Ovary (tissue), 10 donors: ENCODE measurements at regions of chr15 and their contacts with region 1.

Region 1: DNA sequence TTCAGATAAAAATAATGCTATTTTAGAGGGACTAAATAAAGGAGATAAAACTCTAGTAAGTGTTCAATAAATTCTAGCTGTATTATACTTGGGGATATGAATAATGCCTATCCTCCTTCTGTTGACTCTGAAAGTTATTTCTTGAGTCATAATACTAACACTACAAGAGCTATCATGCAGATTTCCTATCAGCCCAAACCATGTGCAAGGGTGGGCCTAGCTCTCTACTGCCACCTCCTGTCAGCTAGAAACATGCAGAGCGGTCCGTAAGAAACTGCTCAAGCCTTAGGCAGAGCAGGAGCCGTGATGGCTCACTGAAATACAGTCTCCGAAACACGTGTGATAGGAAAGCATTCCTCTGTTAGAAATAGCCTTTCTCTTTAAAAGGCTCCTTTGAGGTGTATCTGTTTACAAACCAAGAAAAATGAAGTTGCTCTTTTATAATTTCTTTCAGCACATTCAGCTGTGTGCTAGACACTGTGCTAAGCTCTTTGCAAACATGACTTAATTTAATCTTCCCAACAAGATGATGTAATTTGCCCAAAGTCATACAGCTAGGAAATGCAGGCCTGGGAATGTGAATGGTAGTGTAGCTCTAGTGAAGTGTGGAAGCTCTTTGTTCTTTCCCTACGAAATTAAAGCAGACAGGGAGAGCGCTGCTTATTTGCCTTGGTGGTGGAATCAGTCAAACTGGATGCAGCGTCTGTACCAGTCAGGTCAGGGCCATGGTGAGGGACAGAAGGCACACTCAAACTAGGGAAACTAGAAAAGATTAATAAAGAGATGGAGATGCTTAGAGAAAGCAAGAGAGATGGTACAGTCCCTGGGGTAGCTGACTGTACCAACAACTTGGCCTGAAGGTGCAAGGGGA is 43.1 kb downstream of the MTHFS start:
- DNase-seq: peak; percentile 39 to 69 (median 63)
- H3K4me3 ChIP-seq: no peak overlapping the region
- H3K27ac ChIP-seq: no peak overlapping the region
- H3K4me1 ChIP-seq: no peaks in the 10 kb centered on the region
- H3K27me3 ChIP-seq: no peaks in the 10 kb centered on the region
- CTCF ChIP-seq: peak; percentile 69 to 83 (median 72)
- EP300 ChIP-seq: no peak
- POLR2A ChIP-seq: no peak

Region 2: DNA sequence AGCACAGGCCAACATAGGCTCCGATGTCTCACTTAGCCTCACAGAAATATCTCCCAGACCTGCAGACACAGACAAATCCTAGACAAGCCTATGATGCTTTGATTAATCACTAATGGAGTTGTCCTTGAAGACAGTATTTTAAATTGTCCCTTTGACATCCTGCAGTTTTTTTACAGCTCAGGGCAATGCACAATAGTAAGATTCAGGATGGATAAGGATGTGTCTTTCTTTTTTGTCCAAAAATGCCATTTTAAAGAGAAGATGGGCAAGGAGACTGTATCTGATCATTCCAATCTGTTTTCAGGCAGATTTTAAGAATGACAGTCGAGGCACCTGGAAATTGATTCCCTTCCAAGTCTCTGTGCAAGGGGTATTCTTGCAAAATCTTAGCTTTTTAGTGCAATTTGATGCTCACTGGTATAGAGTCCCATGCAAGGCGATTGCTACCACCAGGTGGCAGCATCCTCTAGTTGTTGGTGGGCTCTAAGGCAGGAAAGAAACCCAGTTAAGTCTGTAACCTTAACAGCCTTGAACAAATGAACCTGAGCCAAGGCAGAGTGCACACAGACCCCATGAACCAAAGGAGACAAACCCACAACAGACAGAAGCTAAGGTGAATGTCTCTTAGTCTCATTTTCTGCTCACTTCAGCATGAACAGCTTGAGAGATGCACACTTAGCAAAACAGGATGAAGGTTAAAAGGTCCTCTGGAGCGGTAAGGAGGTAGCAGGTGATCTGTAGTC is 472.8 kb before region 1 on chr15:
- intact Hi-C with region 1: loop called in 3 of 4 experiments (anchors 5 to 10 kb)
- DNase-seq: peak; percentile 63 to 86 (median 81)
- H3K4me3 ChIP-seq: no peak overlapping the region
- H3K27ac ChIP-seq: no peak overlapping the region
- H3K4me1 ChIP-seq: peaks cover 1% of the 10 kb centered on the region
- H3K27me3 ChIP-seq: no peaks in the 10 kb centered on the region
- CTCF ChIP-seq: peak; percentile 52 to 83 (median 60)
- EP300 ChIP-seq: no peak
- POLR2A ChIP-seq: no peak

Region 3: GRCh38 chr15:79798311-79798710 is 55.4 kb before region 1 on chr15:
- intact Hi-C with region 1: no loop called
- DNase-seq: no peak
- H3K4me3 ChIP-seq: no peak overlapping the region
- H3K27ac ChIP-seq: no peak overlapping the region
- H3K4me1 ChIP-seq: no peaks in the 10 kb centered on the region
- H3K27me3 ChIP-seq: no peaks in the 10 kb centered on the region
- CTCF ChIP-seq: no peak
- EP300 ChIP-seq: no peak
- POLR2A ChIP-seq: no peak

Region 4: DNA sequence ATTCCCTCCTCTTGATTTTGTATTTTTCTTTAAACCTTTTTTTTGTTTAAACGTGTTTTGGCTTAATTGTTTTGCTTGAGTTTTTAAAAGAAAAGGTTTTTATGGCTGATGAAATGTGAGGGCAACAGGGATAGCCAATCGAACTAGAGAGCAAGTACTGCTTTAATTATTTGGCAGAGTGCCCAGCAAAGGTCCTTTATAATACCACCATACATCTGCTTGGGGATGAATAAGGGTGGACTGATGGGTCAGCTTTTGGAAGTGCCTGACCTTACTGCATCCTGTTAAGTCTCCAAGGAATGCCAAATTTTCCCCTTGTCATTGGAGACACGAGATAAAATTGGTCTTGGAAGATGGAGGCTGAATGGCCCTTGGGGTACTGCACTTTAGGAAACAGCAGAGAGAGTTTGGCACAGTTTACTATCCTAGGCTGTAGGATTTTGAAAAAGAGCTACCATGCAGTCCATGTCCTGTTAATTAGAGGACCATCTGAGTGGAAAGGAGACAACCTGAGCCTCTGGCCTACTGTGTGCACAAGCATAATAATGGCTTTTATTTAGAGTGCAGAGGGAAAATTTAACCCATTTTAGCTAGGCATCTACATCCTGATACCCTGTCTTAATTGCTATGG is 62.9 kb after region 1 on chr15:
- intact Hi-C with region 1: no loop called
- DNase-seq: no peak
- H3K4me3 ChIP-seq: no peak overlapping the region
- H3K27ac ChIP-seq: no peak overlapping the region
- H3K4me1 ChIP-seq: no peaks in the 10 kb centered on the region
- H3K27me3 ChIP-seq: no peaks in the 10 kb centered on the region
- CTCF ChIP-seq: no peak
- EP300 ChIP-seq: no peak
- POLR2A ChIP-seq: no peak

Region 5: DNA sequence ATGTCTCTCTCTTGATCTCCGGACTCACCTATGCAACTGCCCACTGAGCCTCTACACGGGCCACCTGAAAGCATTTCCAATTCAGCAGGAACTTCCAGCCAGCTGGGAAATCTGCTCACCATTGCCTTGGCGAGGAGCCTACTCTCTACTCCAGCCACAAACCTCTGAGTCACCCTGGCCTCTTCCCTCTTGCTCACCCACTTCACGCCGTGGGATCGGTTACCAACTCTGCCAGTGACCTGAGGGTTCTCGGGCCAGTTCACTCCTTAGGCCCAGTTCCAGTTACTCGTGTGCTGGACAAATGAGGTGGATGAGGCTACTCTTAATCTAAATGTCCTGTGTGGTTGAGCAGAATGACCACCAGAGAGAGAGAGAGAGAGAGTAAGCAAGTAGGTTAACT is 995.6 kb after region 1 on chr15:
- intact Hi-C with region 1: no loop called
- DNase-seq: peak in 4 of 5 donors; percentile 32 to 58 (median 46)
- H3K4me3 ChIP-seq: no peak overlapping the region
- H3K27ac ChIP-seq: no peak overlapping the region
- H3K4me1 ChIP-seq: peaks cover 8% of the 10 kb centered on the region
- H3K27me3 ChIP-seq: no peaks in the 10 kb centered on the region
- CTCF ChIP-seq: no peak
- EP300 ChIP-seq: no peak
- POLR2A ChIP-seq: no peak